Caco-2 (cell line): ENCODE measurements at regions of chr1 and their contacts with region 1.

Region 1: GRCh38 chr1:89987170-89987819 is 7.6 kb upstream of the ZNF326 start:
- DNase-seq: peak in 1 of 2 experiments; percentile 50
- H3K4me3 ChIP-seq: no peak overlapping the region
- H3K4me3 Mint-ChIP-seq: no peak overlapping the region
- H3K27ac Mint-ChIP-seq: no peak overlapping the region
- H3K4me1 ChIP-seq: peaks cover 35% of the 10 kb centered on the region
- H3K4me1 Mint-ChIP-seq: peaks cover 30% of the 10 kb centered on the region
- H3K27me3 ChIP-seq: no peaks in the 10 kb centered on the region
- H3K27me3 Mint-ChIP-seq: no peaks in the 10 kb centered on the region
- CTCF ChIP-seq: peak; percentile 63 to 71

Region 2: DNA sequence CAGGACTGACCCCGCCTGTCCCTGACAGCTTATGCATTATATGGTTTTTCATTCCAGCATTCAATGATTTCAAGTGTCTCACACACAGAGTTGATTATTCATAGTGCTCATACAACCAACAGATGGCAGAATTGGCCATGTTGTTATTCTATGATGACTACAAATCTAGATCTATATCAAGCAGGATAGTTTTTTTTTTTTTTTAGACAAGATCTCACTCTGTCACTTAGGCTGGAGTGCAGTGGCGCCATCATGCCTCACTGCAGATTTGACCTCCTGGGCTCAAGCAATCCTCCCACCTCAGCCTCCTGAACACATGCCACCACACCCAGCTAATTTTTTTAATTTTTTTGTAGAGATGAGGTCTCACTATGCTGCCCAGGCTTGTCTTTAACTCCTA is 206.6 kb before region 1 on chr1:
- CTCF ChIA-PET with region 1: no interaction called
- POLR2A ChIA-PET with region 1: no interaction called
- intact Hi-C with region 1: loop called (anchors 1 kb)
- DNase-seq: peak in 1 of 2 experiments; percentile 2
- H3K4me3 ChIP-seq: no peak overlapping the region
- H3K4me3 Mint-ChIP-seq: no peak overlapping the region
- H3K27ac Mint-ChIP-seq: no peak overlapping the region
- H3K4me1 ChIP-seq: no peaks in the 10 kb centered on the region
- H3K4me1 Mint-ChIP-seq: no peaks in the 10 kb centered on the region
- H3K27me3 ChIP-seq: no peaks in the 10 kb centered on the region
- H3K27me3 Mint-ChIP-seq: no peaks in the 10 kb centered on the region
- CTCF ChIP-seq: peak in 1 of 2 experiments; percentile 9

Region 3: GRCh38 chr1:89820422-89821321 is 166.6 kb before region 1 on chr1 and contains the start of gene LRRC8D:
- CTCF ChIA-PET with region 1: no interaction called
- POLR2A ChIA-PET with region 1: no interaction called
- intact Hi-C with region 1: loop called (anchors 1 kb)
- DNase-seq: peak; percentile 83 to 87
- H3K4me3 ChIP-seq: peak within 1 kb of the TSS; percentile 82
- H3K4me3 Mint-ChIP-seq: peak within 1 kb of the TSS; percentile 92
- H3K27ac Mint-ChIP-seq: peak within 1 kb of the TSS; percentile 90
- H3K4me1 ChIP-seq: peaks cover 14% of the 10 kb centered on the region
- H3K4me1 Mint-ChIP-seq: peaks cover 22% of the 10 kb centered on the region
- H3K27me3 ChIP-seq: no peaks in the 10 kb centered on the region
- H3K27me3 Mint-ChIP-seq: no peaks in the 10 kb centered on the region
- CTCF ChIP-seq: no peak
- total RNA-seq, gene LRRC8D: 34.4 and 39.4 TPM in 2 replicates

Region 4: DNA sequence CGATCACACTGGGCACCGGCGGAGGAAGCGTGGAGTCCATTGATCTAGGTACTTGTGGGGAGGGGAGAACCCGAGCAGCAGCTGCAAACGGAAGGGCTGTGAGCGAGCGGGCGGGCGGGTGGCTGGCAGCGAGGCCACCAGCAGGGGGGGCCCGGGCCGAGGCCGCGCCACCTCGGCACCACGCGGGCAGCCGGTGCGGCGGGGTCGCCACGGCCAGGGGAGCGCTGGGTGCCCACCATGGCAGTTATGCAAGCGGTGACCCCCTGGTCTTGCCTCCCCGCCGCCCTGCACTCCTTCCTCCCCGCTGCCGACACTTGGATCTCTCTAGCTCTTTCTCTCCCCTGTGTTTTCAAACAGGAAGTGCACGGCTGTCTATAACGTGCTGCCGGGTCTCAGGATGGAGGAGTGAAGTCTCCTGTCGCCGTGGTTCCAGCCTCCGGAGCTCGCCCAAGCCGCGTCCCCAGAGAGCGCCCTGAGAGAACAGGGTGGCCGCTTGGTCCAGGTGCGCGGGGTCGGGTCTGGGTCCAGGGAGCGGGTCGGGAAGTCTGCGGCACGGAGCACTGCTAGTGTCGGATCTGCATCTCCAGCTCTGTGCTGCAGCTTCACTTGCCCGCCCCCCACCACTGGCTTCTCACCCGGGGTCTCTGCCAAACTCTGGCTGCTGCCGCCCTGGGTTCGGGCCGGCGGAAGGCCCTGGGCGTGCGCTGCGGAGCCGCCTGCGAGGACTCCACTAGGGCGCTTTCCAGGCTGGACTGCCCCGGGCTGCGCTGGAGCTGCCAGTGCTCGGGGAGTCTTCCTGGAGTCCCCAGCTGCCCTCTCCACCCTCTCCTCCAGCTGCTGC is 143.8 kb before region 1 on chr1:
- CTCF ChIA-PET with region 1: no interaction called
- POLR2A ChIA-PET with region 1: no interaction called
- intact Hi-C with region 1: loop called (anchors 1 kb)
- DNase-seq: peak; percentile 68 to 73
- H3K4me3 ChIP-seq: peak overlapping the region; percentile 70
- H3K4me3 Mint-ChIP-seq: peak overlapping the region; percentile 84
- H3K27ac Mint-ChIP-seq: peak overlapping the region; percentile 67
- H3K4me1 ChIP-seq: peaks cover 6% of the 10 kb centered on the region; the same call in 1 of the 2 replicates
- H3K4me1 Mint-ChIP-seq: peaks cover 16% of the 10 kb centered on the region
- H3K27me3 ChIP-seq: no peaks in the 10 kb centered on the region
- H3K27me3 Mint-ChIP-seq: no peaks in the 10 kb centered on the region
- CTCF ChIP-seq: peak; percentile 32 to 55

Region 5: DNA sequence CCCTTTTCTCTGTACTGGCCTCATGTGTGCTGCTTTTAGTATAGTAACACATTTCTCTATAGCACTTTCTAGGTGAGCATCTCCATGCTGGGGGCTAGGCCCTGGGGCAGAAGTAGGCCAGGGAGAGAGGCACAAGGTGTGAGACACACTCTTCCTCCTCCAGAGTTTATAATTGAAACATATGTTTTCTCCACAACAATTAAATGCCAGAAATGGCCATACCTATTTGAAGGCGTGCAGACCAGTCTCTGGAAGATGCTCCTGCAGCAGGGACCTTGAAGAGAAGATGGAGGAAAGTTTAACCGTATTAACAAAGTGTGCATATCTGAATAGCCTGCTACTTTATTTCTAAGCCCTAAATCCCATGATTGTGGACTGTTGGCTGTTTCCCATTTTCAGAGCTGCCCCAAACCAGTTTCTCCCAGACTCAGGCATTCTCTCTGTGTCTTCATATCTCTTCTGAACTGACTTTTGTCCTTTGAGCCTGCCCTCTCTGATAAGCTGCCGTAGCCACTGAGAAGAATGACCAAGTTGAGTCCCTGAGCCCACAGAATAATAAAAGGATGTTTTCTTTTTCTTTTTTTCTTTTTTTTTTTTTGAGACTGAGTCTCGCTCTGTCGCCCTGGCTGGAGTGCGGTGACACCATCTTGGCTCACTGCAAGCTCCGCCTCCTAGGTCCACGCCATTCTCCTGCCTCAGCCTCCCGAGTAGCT is 85.2 kb before region 1 on chr1:
- CTCF ChIA-PET with region 1: no interaction called
- POLR2A ChIA-PET with region 1: interaction called, 12 read pairs
- intact Hi-C with region 1: no loop called
- DNase-seq: peak; percentile 75 to 84
- H3K4me3 ChIP-seq: no peak overlapping the region; the same call in 1 of the 2 replicates
- H3K4me3 Mint-ChIP-seq: peak overlapping the region; percentile 53
- H3K27ac Mint-ChIP-seq: peak overlapping the region; percentile 82
- H3K4me1 ChIP-seq: peaks cover 73% of the 10 kb centered on the region
- H3K4me1 Mint-ChIP-seq: peaks cover 15% of the 10 kb centered on the region
- H3K27me3 ChIP-seq: no peaks in the 10 kb centered on the region
- H3K27me3 Mint-ChIP-seq: no peaks in the 10 kb centered on the region
- CTCF ChIP-seq: no peak

Region 6: DNA sequence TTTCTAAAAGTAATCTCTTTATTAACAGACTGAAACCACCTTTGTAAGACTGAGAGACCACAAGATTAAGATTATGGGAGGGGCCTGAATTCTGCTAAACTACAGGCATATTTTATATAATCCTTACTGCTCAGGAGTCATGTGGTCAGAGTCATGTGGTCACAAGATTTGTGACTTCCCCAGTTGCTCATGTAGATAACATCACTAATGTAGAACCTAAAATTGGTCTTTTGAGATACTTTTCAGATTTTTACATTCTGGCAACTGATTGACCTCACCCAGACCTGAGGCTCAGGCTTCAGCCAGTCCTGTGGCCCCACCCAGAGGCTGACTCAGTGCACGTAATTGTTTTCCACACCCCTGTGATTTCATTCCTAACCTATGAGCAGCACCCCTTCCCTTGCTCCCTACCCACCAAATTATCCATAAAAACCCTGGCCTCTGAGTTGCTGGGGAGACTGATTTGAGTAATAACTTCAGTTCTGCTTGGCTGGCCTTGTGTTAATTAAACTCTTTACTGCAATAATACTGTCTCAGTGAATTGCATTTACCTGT is 34.1 kb before region 1 on chr1:
- CTCF ChIA-PET with region 1: no interaction called
- POLR2A ChIA-PET with region 1: no interaction called
- intact Hi-C with region 1: loop called (anchors 2 kb)
- DNase-seq: peak; percentile 48 to 61
- H3K4me3 ChIP-seq: no peak overlapping the region
- H3K4me3 Mint-ChIP-seq: no peak overlapping the region
- H3K27ac Mint-ChIP-seq: no peak overlapping the region
- H3K4me1 ChIP-seq: peaks cover 52% of the 10 kb centered on the region
- H3K4me1 Mint-ChIP-seq: peaks cover 25% of the 10 kb centered on the region
- H3K27me3 ChIP-seq: no peaks in the 10 kb centered on the region
- H3K27me3 Mint-ChIP-seq: no peaks in the 10 kb centered on the region
- CTCF ChIP-seq: no peak